Tibial artery (tissue), 4 donors: ENCODE measurements at regions of chr7 and their contacts with region 1.

Region 1: DNA sequence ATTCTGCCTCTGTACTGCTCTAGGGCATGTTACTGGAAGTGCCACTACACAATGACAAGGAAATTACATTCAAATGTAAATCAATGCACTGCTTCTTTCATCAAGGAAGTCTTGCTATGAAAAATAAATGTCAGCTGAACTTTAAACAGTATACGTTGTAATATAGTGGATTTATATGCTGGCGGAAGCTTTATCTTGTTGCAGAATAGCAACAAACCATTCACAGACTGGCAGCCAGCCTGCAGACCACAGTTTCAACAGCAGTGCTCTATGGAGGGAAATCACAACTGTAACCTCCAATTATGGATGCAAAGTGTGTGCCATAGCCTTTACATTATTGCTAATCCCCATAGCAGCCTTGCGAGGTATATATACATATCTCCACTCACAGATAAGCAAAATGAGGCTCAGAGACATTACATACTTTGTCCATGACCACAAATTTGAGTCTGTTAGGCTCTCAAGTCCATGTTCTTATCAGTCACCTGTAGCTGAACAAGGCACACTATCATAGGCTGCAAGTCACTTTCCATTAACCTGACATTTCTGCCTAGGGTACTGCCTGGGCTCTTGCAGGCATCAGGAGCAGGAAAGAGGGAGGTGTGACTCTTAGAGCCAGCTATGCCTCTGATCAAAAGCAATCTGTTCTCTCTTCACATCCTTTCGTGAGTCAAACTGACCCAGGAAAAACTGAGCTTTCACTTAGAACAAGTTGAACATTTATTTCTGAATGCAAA is 22.6 kb downstream of the COL28A1 start:
- DNase-seq: no peak
- H3K4me3 ChIP-seq: no peak overlapping the region
- H3K27ac ChIP-seq: no peak overlapping the region
- H3K4me1 ChIP-seq: no peaks in the 10 kb centered on the region
- H3K27me3 ChIP-seq: no peaks in the 10 kb centered on the region
- CTCF ChIP-seq: no peak

Region 2: GRCh38 chr7:7577888-7578287 is 64.9 kb after region 1 on chr7:
- intact Hi-C with region 1: loop called (anchors 2 kb)
- DNase-seq: no peak
- H3K4me3 ChIP-seq: no peak overlapping the region
- H3K27ac ChIP-seq: no peak overlapping the region
- H3K4me1 ChIP-seq: no peaks in the 10 kb centered on the region
- H3K27me3 ChIP-seq: no peaks in the 10 kb centered on the region
- CTCF ChIP-seq: no peak

Region 3: DNA sequence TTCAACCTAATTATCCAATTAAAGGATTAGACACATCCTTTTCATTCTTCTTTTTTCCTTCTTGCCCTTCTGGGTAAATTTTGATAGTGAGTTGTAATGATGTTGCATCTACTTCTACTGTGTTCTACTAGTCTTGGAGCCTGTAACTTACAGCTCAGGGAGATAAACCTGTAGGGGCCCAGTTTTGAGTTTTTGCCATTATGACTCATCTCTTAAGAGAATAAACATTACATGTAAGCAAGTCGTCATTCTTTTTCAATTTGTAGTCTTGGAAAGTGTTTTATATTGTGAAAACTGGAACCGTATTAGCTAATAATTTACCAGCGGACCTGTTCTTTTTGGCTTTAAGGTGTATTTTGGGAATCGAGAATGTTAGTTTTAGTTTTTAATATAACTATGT is 295.1 kb after region 1 on chr7:
- intact Hi-C with region 1: no loop called
- DNase-seq: no peak
- H3K4me3 ChIP-seq: no peak overlapping the region
- H3K27ac ChIP-seq: no peak overlapping the region
- H3K4me1 ChIP-seq: peaks cover 0 to 4% (median 0%) of the 10 kb centered on the region in 4 donors
- H3K27me3 ChIP-seq: no peaks in the 10 kb centered on the region
- CTCF ChIP-seq: no peak